Activated CD4-positive, alpha-beta T cell treated with anti-CD3 and anti-CD28 coated beads for 36 hours (primary cell): ENCODE measurements at regions of chr9 and their contacts with region 1.

Region 1: DNA sequence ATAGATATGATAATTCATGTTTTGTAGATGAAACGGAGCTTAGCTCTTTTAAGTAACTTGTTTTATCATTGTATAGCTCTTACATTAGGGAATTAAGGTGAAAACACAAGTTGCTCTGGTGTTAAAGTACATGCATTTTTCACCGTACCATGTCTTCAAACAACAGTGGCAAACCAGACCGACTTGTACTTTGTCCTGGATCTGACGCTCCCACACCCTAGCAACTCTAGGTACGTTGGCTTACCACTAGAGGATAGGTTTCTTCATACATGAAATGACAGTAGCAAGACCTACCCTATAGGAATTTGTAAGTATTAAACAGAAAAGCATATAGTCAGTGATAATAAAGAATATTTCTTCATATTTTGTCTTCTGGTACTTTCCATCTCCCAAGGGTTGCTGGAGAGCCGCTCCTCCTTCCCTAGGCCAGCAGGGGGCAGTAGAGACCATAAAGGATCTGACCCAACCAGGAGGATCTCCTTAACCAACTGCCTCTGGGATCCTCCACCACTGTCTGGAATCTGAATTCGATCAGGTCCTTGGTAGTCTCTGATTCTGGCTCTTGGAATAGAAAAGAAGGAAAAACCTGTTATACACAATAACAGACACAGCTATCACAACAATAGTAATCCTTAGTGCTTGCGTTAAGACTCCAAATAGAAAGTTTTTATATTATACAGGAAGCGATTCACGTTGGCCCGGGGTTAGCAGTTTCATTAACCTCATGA is 136.7 kb downstream of the CAVIN4 start:
- DNase-seq: peak; percentile 77
- ATAC-seq: peak; percentile 53
- H3K4me3 Mint-ChIP-seq: no peak overlapping the region
- H3K27ac Mint-ChIP-seq: no peak overlapping the region
- H3K4me1 Mint-ChIP-seq: no peaks in the 10 kb centered on the region
- H3K27me3 Mint-ChIP-seq: peaks cover 5% of the 10 kb centered on the region

Region 2: GRCh38 chr9:101119206-101119819 is 404.8 kb after region 1 on chr9:
- CTCF ChIA-PET with region 1: no interaction called
- POLR2A ChIA-PET with region 1: no interaction called
- intact Hi-C with region 1: loop called in 1 of 2 experiments (anchors 5 kb)
- DNase-seq: peak; percentile 57
- ATAC-seq: no peak
- H3K4me3 Mint-ChIP-seq: no peak overlapping the region
- H3K27ac Mint-ChIP-seq: no peak overlapping the region
- H3K4me1 Mint-ChIP-seq: no peaks in the 10 kb centered on the region
- H3K27me3 Mint-ChIP-seq: no peaks in the 10 kb centered on the region

Region 3: GRCh38 chr9:101235105-101235866 is 520.8 kb after region 1 on chr9:
- CTCF ChIA-PET with region 1: no interaction called
- POLR2A ChIA-PET with region 1: no interaction called
- intact Hi-C with region 1: loop called in 1 of 2 experiments (anchors 10 kb)
- DNase-seq: no peak
- ATAC-seq: no peak
- H3K4me3 Mint-ChIP-seq: no peak overlapping the region
- H3K27ac Mint-ChIP-seq: no peak overlapping the region
- H3K4me1 Mint-ChIP-seq: no peaks in the 10 kb centered on the region
- H3K27me3 Mint-ChIP-seq: peaks cover 2% of the 10 kb centered on the region